Activated CD4-positive, alpha-beta memory T cell treated with anti-CD3 and anti-CD28 coated beads for 36 hours (primary cell): ENCODE measurements at regions of chr1 and their contacts with region 1.

Region 1: GRCh38 chr1:220272047-220272840 is at the start of gene RAB3GAP2:
- DNase-seq: peak; percentile 97
- H3K4me3 Mint-ChIP-seq: no peak within 1 kb of the TSS
- H3K27ac Mint-ChIP-seq: peak within 1 kb of the TSS; percentile 86
- H3K4me1 Mint-ChIP-seq: peaks cover 17% of the 10 kb centered on the region
- H3K27me3 Mint-ChIP-seq: peaks cover 3% of the 10 kb centered on the region
- total RNA-seq, gene RAB3GAP2: 46.1 to 46.5 TPM

Region 2: DNA sequence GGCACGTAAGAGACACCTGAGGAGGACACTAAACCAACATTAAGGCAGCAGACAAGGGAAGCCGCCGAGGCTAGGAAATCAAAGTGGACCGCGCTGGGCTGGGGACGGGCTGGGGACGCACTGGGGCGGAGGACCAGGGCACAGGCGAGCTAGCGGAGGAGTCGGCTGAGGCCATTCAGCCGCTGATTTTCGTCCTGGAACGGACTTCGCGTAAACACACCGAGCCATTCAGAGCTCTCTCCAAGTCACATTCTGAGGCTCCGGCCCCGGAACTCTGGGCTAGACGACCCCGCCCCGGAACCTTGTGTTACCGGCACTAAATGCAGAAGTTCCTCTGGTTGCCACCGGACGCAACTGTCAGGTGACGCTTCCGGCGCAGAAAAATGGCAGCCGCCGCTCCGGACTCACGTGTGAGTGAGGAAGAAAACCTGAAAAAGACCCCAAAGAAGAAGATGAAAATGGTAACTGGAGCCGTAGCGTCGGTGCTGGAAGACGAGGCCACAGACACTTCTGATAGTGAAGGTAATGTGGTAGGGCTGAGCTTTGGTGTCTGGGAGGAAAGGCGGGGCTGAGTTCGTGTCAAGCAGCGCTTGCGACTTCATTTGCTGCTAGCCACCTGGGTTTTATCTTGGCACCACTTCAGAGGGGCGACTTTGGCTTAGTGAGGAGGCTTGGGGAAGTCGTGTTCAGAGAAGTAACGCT is 1987.2 kb before region 1 on chr1 and contains the start of gene RRP15:
- CTCF ChIA-PET with region 1: no interaction called
- POLR2A ChIA-PET with region 1: no interaction called
- intact Hi-C with region 1: loop called (anchors 10 kb)
- DNase-seq: peak; percentile 92
- H3K4me3 Mint-ChIP-seq: peak within 1 kb of the TSS; percentile 97
- H3K27ac Mint-ChIP-seq: peak within 1 kb of the TSS; percentile 80
- H3K4me1 Mint-ChIP-seq: peaks cover 25% of the 10 kb centered on the region
- H3K27me3 Mint-ChIP-seq: peaks cover 11% of the 10 kb centered on the region
- total RNA-seq, gene RRP15: 18.0 to 18.8 TPM

Region 3: GRCh38 chr1:220046052-220046930 is 226.0 kb before region 1 on chr1 and contains the start of gene EPRS1:
- CTCF ChIA-PET with region 1: no interaction called
- POLR2A ChIA-PET with region 1: no interaction called
- intact Hi-C with region 1: loop called (anchors 2 kb)
- DNase-seq: peak; percentile 97
- H3K4me3 Mint-ChIP-seq: peak within 1 kb of the TSS; percentile 94
- H3K27ac Mint-ChIP-seq: peak within 1 kb of the TSS; percentile 96
- H3K4me1 Mint-ChIP-seq: peaks cover 29% of the 10 kb centered on the region
- H3K27me3 Mint-ChIP-seq: no peaks in the 10 kb centered on the region
- total RNA-seq, gene EPRS1: 191 to 198 TPM

Region 4: GRCh38 chr1:220089650-220090556 is 182.3 kb before region 1 on chr1 and contains the start of gene BPNT1:
- CTCF ChIA-PET with region 1: no interaction called
- POLR2A ChIA-PET with region 1: no interaction called
- intact Hi-C with region 1: loop called (anchors 1 kb)
- DNase-seq: peak; percentile 98
- H3K4me3 Mint-ChIP-seq: peak within 1 kb of the TSS; percentile 88
- H3K27ac Mint-ChIP-seq: peak within 1 kb of the TSS; percentile 82
- H3K4me1 Mint-ChIP-seq: peaks cover 10% of the 10 kb centered on the region
- H3K27me3 Mint-ChIP-seq: no peaks in the 10 kb centered on the region
- total RNA-seq, gene BPNT1: 20.5 to 25.8 TPM

Region 5: DNA sequence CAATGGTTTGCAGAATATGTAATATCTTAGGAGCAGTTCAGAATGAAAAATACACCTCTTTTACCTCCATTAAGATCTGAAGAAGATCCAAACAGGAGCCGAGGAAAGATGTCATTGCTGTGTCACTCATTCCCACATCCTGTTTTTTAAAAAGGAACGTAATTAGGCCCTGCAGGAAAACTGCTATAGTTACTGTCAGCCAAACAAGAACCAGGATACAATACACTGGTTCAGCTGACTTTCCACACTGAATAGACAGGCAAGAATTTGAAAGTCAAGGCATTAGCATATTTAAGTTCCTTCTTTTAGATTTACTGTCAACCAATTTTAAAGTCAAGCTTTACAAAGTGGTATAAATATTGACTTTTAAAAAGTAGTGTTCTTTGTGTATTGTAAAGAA is 114.5 kb before region 1 on chr1:
- CTCF ChIA-PET with region 1: no interaction called
- POLR2A ChIA-PET with region 1: no interaction called
- intact Hi-C with region 1: no loop called
- DNase-seq: no peak
- H3K4me3 Mint-ChIP-seq: no peak overlapping the region
- H3K27ac Mint-ChIP-seq: no peak overlapping the region
- H3K4me1 Mint-ChIP-seq: peaks cover 23% of the 10 kb centered on the region
- H3K27me3 Mint-ChIP-seq: no peaks in the 10 kb centered on the region

Region 6: GRCh38 chr1:220217383-220217988 is 54.8 kb before region 1 on chr1:
- CTCF ChIA-PET with region 1: interaction called, 3 read pairs
- POLR2A ChIA-PET with region 1: interaction called, 4 read pairs
- intact Hi-C with region 1: loop called (anchors 1 kb)
- DNase-seq: no peak
- H3K4me3 Mint-ChIP-seq: no peak overlapping the region
- H3K27ac Mint-ChIP-seq: no peak overlapping the region
- H3K4me1 Mint-ChIP-seq: peaks cover 30% of the 10 kb centered on the region
- H3K27me3 Mint-ChIP-seq: no peaks in the 10 kb centered on the region

Region 7: DNA sequence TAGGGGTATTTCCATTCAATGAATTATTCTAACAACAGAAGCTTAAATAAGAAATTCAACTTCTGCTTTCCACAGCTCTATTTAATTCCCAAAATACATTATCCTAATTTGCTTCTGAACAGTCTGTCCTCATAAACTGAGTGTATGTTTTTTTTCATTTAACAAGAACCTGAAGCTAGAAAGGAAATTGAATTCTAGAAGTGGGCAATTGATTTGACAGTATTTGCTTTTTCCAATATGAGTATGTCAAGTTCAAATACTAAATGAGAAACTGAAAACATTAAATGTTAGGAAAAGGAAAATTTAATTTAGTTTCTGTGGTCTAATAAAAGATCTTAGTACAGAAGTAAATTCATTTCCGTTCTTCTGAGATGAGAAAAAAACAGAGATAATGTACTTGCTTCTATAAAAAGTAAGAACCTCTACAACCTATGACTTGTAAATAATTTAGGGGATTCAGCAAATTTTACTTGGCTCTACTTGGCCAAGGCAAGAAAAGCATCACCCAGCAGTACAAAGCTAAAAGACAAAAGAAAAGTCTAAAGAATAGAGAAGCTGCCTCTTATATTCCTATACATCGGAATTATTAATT is 31.1 kb before region 1 on chr1:
- CTCF ChIA-PET with region 1: no interaction called
- POLR2A ChIA-PET with region 1: interaction called, 3 read pairs
- intact Hi-C with region 1: loop called (anchors 2 kb)
- DNase-seq: no peak
- H3K4me3 Mint-ChIP-seq: no peak overlapping the region
- H3K27ac Mint-ChIP-seq: no peak overlapping the region
- H3K4me1 Mint-ChIP-seq: peaks cover 40% of the 10 kb centered on the region
- H3K27me3 Mint-ChIP-seq: no peaks in the 10 kb centered on the region

Region 8: GRCh38 chr1:220326578-220326977 is 54.3 kb after region 1 on chr1:
- CTCF ChIA-PET with region 1: no interaction called
- POLR2A ChIA-PET with region 1: no interaction called
- intact Hi-C with region 1: no loop called
- DNase-seq: no peak
- H3K4me3 Mint-ChIP-seq: no peak overlapping the region
- H3K27ac Mint-ChIP-seq: no peak overlapping the region
- H3K4me1 Mint-ChIP-seq: no peaks in the 10 kb centered on the region
- H3K27me3 Mint-ChIP-seq: peaks cover 6% of the 10 kb centered on the region

Region 9: GRCh38 chr1:220690140-220691025 is 418.1 kb after region 1 on chr1 and contains the start of gene C1orf115:
- CTCF ChIA-PET with region 1: no interaction called
- POLR2A ChIA-PET with region 1: no interaction called
- intact Hi-C with region 1: loop called (anchors 5 kb)
- DNase-seq: peak; percentile 85
- H3K4me3 Mint-ChIP-seq: peak within 1 kb of the TSS; percentile 77
- H3K27ac Mint-ChIP-seq: no peak within 1 kb of the TSS
- H3K4me1 Mint-ChIP-seq: peaks cover 7% of the 10 kb centered on the region
- H3K27me3 Mint-ChIP-seq: peaks cover 8% of the 10 kb centered on the region
- total RNA-seq, gene C1orf115: 0.73 to 0.76 TPM